ENCODE measurements at regions of chr6 and their contacts with region 1.

Region 1: GRCh38 chr6:150891888-150892485 is 26.5 kb downstream of the MTHFD1L start:
- DNase-seq: peak; percentile 63 to 92 (median 76)
- H3K4me3 ChIP-seq: no peak overlapping the region
- H3K27ac ChIP-seq: no peak overlapping the region
- H3K4me1 ChIP-seq: peaks cover 0 to 3% of the 10 kb centered on the region in 2 donors
- H3K27me3 ChIP-seq: no peaks in the 10 kb centered on the region
- CTCF ChIP-seq: peak; percentile 75 to 88 (median 83)
- POLR2A ChIP-seq: no peak

Region 2: DNA sequence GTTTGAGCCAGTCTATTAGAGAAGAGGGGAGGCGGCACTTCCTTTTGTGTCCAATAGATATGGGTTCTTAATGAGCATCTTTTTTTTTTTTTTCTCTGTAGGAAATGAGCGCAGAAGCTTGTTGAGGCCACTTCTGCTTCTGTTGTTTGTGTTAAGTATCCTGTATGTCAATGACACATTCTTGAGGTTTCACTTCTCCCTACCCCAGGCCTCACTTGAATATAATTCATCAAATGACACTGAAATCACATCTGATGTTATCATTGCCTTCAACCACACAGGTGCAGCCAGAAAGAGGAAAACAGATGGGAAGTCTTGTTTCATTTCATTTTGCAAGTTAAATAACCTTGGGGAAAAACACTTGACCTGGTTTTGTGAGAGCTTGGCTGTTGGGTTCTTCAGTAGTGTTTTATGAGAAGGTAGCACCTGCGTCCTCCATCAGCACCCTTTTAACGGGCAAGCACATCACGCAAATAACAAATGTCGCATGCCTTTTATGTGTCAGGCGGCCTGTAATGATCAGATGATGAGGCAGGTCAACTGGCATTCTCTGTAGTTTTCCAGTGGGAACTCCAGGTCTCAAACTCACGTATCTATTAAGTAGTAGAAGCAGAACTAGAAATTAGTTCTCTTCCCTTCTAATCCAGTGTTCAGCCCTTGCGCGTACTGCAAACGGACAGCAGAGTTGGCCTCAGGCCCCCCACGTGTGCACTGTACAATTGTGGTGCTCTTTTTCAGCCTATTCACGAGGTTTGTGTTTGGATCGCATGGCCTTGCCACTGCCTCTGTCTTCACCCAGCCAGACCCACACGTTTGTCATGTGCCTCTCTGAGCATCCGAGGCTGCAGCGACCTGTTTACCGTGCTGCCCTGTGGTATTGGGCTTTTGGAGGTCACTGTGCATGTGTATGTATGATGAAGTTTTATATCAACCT is 268.8 kb before region 1 on chr6:
- intact Hi-C with region 1: no loop called
- DNase-seq: peak in 1 of 7 donors; percentile 16
- H3K4me3 ChIP-seq: no peak overlapping the region
- H3K27ac ChIP-seq: no peak overlapping the region
- H3K4me1 ChIP-seq: peaks cover 0 to 9% of the 10 kb centered on the region in 2 donors
- H3K27me3 ChIP-seq: no peaks in the 10 kb centered on the region
- CTCF ChIP-seq: no peak
- POLR2A ChIP-seq: no peak

Region 3: DNA sequence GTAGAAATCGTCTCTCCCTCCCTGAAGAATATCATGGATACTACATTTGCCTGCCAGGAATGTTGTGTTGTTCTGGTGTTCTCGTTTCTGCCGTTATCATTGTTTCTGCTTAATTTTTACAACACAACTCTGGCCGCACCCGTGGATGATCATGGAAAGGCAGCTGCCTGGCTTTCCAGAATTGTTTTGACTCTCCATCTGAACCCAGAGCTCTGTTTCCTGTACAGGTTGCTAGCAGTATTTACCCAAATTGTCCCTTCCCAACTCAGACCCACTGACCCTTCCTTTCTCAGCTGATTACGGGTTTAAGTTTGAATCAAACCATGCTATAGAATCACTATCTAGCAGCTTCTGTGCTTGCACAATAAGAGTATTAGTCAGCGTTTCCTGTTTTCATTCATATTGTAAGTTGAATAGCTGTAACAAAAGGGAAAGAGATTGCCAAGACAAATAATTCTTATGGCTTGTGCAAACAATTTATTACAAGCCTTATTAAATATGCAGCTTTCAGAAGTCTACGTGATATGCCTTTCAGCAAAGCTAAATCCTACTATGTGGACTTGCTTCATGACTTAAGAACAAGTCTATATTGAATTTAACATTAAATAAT is 112.5 kb after region 1 on chr6:
- intact Hi-C with region 1: loop called in 1 of 2 experiments (anchors 10 kb)
- DNase-seq: peak in 3 of 7 donors; percentile 13 to 23 (median 21)
- H3K4me3 ChIP-seq: peak overlapping the region in 1 of 4 donors; percentile 10
- H3K27ac ChIP-seq: peak overlapping the region in 3 of 5 donors; percentile 41 to 77 (median 73)
- H3K4me1 ChIP-seq: peaks cover 6 to 20% of the 10 kb centered on the region in 2 donors
- H3K27me3 ChIP-seq: no peaks in the 10 kb centered on the region
- CTCF ChIP-seq: no peak
- POLR2A ChIP-seq: no peak

Region 4: DNA sequence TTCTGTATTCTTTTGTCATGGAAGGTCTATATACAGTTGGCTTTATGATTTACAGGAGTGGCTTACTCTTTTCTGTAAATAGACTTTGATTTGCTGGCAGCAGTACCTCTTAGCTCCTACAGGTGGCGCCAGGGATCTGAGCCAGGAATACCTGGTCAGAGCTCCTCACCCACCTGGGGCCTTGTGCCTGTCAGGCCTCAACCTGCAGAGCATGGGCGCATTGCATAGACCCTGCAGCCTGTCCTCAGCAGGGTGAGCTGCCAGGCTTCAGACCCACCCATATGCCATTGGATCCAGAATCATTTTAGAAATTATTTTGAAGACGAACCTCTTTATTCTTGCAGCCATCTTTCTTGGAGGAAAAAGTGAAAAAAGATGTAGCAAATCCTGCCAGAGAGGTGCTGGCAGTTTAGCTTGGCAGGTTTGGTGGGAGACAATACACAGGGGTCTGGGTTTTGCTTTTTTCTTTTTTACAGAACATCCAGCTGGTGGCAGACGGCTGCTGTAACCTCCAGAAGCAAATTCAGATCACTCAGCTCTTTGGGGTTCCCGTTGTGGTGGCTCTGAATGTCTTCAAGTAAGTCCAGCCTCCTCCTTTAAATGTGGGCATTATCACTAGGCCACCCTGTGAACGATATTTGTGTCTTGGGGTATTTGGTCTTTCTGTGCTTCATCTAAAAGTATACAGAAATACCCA is 122.6 kb after region 1 on chr6:
- intact Hi-C with region 1: loop called (anchors 10 kb)
- DNase-seq: peak in 6 of 7 donors; percentile 55 to 87 (median 58)
- H3K4me3 ChIP-seq: no peak overlapping the region
- H3K27ac ChIP-seq: no peak overlapping the region
- H3K4me1 ChIP-seq: peaks cover 0 to 4% of the 10 kb centered on the region in 2 donors
- H3K27me3 ChIP-seq: no peaks in the 10 kb centered on the region
- CTCF ChIP-seq: peak; percentile 88 to 99 (median 94)
- POLR2A ChIP-seq: no peak

Region 5: GRCh38 chr6:151323791-151324487 is 432.0 kb after region 1 on chr6:
- intact Hi-C with region 1: loop called (anchors 2 to 5 kb)
- DNase-seq: peak; percentile 75 to 93 (median 80)
- H3K4me3 ChIP-seq: no peak overlapping the region
- H3K27ac ChIP-seq: peak overlapping the region in 2 of 5 donors; percentile 41 to 66
- H3K4me1 ChIP-seq: peaks cover 4 to 24% of the 10 kb centered on the region in 2 donors
- H3K27me3 ChIP-seq: no peaks in the 10 kb centered on the region
- CTCF ChIP-seq: peak; percentile 94 to 98 (median 97)
- POLR2A ChIP-seq: no peak

Region 6: GRCh38 chr6:151339369-151339768 is 447.4 kb after region 1 on chr6:
- intact Hi-C with region 1: loop called in 1 of 2 experiments (anchors 2 kb)
- DNase-seq: no peak
- H3K4me3 ChIP-seq: no peak overlapping the region
- H3K27ac ChIP-seq: no peak overlapping the region
- H3K4me1 ChIP-seq: no peaks in the 10 kb centered on the region
- H3K27me3 ChIP-seq: no peaks in the 10 kb centered on the region
- CTCF ChIP-seq: no peak
- POLR2A ChIP-seq: no peak

Measured in adrenal gland (tissue), 19 donors.